ENCODE measurements at regions of chr4 and their contacts with region 1.

Region 1: DNA sequence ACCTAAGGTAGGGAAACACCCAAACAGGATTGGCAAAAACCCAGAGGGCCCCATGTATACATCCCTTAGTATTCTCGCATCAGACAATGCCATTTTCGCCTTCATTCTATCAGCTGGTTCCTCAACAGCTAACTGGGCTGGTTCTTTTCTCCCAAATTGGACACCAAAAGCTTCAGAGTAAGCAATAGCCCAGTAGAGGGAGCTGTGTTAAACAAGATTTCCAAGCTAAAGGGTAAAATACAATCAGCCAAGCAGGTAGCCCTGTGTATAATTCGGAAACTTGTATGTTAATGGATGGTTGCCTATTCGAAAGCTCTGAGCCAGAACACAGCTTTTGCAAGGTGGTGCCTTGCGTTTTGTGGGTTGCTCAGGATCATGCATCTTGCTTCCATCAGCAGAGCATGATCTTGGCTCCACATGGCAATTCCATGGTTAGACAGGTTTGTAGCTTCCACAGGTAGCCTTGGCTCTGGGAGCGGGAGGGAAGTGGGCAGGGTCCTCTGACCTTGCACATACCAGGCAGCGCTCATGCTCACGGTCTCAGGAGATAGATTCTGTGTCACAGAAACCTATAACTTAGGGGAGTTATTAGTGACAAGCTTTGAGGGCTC is 115.2 kb upstream of the LNX1 start:
- DNase-seq: no peak
- ATAC-seq: peak; percentile 30

Region 2: DNA sequence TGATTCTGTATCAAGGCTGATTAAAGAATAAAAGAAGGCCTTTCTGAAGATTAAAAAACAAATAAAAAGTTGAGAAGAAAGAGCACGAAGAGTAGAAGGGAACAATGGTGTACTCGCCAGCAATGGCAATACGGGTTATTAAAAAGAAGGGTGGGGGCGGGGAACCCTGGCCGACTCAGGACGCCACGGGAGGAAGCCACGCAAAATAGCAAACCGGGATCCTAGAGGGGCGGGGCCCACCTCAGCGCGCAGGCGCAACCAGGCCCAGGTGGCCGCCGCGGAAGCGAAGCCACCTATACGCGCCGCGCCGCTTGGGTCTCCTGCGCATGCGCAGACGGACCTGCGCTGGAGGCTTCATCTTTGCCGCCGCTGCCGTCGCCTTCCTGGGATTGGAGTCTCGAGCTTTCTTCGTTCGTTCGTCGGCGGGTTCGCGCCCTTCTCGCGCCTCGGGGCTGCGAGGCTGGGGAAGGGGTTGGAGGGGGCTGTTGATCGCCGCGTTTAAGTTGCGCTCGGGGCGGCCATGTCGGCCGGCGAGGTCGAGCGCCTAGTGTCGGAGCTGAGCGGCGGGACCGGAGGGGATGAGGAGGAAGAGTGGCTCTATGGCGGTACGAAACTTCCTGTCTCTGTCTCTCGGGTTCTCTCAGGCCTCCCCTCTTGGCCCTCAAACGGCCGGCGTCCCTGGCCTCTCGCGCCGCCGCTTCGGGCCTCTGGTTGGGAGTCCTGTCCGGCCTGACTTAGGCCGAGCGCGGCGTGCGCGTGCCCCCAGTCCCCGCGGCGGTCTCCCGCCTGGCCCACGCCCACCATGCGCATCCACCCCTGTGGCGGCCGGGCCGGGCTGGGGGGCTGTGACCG is 329.0 kb before region 1 on chr4 and contains the start of gene FIP1L1:
- intact Hi-C with region 1: loop called in 1 of 2 experiments (anchors 5 kb)
- DNase-seq: peak; percentile 94 to 98
- ATAC-seq: peak; percentile 97
- total RNA-seq, gene FIP1L1: 38.7 to 44.7 TPM

Region 3: DNA sequence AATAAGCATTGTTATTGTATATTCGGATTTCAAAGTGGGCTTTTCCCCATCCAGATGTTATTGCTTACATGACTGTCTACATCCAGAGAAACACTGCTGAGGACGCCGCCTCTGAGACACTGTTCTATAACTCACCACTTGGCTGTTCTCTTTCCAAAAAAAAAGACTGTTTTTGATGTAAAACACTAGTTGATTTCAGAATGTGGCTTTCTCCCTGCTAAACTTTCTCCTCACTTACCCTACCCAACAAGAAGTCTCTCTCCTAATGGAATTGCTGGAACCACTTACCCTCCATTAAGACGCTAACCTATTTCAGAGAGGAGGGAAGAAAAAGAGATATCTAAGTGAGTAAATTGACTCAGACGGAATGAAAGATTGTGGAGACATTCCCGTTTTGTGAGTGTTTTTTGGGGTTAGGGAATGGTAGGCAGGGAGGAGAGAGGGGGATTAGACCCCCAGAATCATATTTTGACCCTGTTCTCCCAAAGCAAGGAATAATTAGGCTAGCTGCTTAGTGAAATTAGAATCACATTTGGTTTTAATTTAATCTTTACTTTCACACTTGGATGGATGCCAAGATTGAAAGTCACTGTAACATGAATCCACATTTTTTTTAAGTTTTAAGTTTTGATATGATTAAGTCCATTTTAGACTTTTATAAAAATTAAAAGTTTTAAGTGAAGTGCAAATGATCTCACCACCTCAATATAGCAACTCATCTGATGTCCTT is 183.0 kb after region 1 on chr4:
- intact Hi-C with region 1: no loop called
- DNase-seq: no peak
- ATAC-seq: no peak

Region 4: DNA sequence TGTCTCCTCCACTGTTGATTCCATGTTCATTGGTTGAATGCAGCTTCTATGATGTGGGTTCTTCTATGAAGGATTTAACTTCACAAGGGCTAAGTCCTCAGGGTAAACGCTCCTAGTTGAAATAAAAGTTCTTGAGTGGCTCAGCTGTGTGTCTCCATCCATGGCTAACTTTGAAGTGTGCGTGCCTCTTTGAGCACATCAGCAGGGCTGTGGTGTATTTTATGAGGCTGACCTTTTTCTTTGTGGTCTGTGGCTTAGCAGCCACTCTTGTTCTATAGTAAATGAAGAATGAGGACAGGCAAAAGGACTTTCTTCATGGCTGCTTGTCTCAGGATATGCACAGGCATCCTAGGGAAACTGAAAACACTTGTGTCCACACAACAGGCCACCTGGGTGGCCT is 1039.7 kb after region 1 on chr4:
- intact Hi-C with region 1: no loop called
- DNase-seq: no peak
- ATAC-seq: no peak

Measured in left colon (tissue), 2 donors.